A673 (cell line): ENCODE measurements at regions of chr19 and their contacts with region 1.

Region 1: GRCh38 chr19:48588670-48589399 is 17.7 kb upstream of the SPACA4 start:
- DNase-seq: peak; percentile 92
- H3K4me3 ChIP-seq: peak overlapping the region; percentile 47
- H3K27ac ChIP-seq: no peak overlapping the region
- H3K4me1 ChIP-seq: peaks cover 4% of the 10 kb centered on the region
- H3K27me3 ChIP-seq: no peaks in the 10 kb centered on the region
- CTCF ChIP-seq: peak; percentile 99

Region 2: DNA sequence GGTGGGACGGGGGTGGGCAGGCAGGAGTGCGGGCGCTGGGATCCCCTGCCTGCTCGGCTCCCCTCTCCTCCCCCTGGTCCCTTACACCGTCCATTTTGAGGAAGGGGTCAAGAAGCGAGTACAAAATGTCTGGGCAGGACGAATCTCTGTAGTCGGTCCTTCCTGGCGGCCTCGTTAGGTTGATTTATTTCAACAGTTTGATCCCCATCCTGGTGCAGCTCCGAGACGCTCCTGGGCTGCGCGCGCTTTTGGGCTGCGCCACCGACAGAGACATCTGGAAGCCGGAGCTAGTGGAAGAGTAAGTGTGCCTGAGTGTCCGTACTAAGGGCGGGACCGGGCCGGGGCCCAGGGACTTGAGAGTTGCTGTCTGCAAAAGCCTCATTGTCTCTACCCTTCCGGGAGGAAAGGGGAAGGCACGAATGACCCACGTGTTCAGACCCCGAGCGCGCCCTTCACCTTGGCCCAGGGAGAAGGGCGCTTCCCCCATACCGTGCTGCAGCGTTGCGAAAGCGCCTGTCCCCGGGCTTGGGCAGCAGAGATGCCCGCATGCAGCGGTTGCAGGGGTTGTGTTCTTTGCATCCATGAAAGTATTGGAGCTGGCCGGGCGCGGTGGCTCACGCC is 317.2 kb before region 1 on chr19:
- CTCF ChIA-PET with region 1: interaction called, 10 read pairs
- POLR2A ChIA-PET with region 1: interaction called, 7 read pairs
- intact Hi-C with region 1: loop called (anchors 5 kb)
- DNase-seq: peak; percentile 62
- H3K4me3 ChIP-seq: peak overlapping the region; percentile 60
- H3K27ac ChIP-seq: peak overlapping the region; percentile 72
- H3K4me1 ChIP-seq: peaks cover 3% of the 10 kb centered on the region
- H3K27me3 ChIP-seq: no peaks in the 10 kb centered on the region
- CTCF ChIP-seq: no peak

Region 3: DNA sequence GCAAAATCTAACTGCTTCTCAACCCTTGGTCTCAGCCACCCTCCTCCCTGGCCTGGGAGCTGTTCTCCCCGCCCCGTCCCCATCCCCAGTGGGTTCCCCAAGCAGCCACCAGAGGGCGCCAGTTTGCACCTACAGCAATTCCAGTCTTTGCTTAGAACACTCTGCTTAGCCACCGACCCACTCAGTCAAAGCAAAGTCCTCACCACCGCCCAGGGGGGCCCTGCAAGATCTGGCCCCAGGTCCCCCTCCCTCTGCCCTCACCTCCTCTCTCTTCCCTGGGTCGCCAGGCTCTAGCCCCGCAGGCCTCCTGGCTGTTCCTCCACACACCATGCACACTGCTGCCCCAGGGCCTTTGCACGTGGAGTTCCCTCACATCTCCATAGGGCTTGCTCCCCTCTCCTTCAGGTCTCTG is 237.5 kb before region 1 on chr19:
- CTCF ChIA-PET with region 1: interaction called, 11 read pairs
- POLR2A ChIA-PET with region 1: no interaction called
- intact Hi-C with region 1: no loop called
- DNase-seq: peak; percentile 76
- H3K4me3 ChIP-seq: no peak overlapping the region
- H3K27ac ChIP-seq: no peak overlapping the region
- H3K4me1 ChIP-seq: no peaks in the 10 kb centered on the region
- H3K27me3 ChIP-seq: no peaks in the 10 kb centered on the region
- CTCF ChIP-seq: peak; percentile 92

Region 4: GRCh38 chr19:48506138-48506733 is 82.6 kb before region 1 on chr19:
- CTCF ChIA-PET with region 1: interaction called, 42 read pairs
- POLR2A ChIA-PET with region 1: no interaction called
- intact Hi-C with region 1: loop called (anchors 1 kb)
- DNase-seq: peak; percentile 78
- H3K4me3 ChIP-seq: no peak overlapping the region
- H3K27ac ChIP-seq: no peak overlapping the region
- H3K4me1 ChIP-seq: peaks cover 6% of the 10 kb centered on the region
- H3K27me3 ChIP-seq: no peaks in the 10 kb centered on the region
- CTCF ChIP-seq: peak; percentile 68

Region 5: GRCh38 chr19:48540110-48540509 is 48.7 kb before region 1 on chr19:
- CTCF ChIA-PET with region 1: no interaction called
- POLR2A ChIA-PET with region 1: no interaction called
- intact Hi-C with region 1: no loop called
- DNase-seq: no peak
- H3K4me3 ChIP-seq: no peak overlapping the region
- H3K27ac ChIP-seq: no peak overlapping the region
- H3K4me1 ChIP-seq: no peaks in the 10 kb centered on the region
- H3K27me3 ChIP-seq: no peaks in the 10 kb centered on the region
- CTCF ChIP-seq: no peak

Region 6: DNA sequence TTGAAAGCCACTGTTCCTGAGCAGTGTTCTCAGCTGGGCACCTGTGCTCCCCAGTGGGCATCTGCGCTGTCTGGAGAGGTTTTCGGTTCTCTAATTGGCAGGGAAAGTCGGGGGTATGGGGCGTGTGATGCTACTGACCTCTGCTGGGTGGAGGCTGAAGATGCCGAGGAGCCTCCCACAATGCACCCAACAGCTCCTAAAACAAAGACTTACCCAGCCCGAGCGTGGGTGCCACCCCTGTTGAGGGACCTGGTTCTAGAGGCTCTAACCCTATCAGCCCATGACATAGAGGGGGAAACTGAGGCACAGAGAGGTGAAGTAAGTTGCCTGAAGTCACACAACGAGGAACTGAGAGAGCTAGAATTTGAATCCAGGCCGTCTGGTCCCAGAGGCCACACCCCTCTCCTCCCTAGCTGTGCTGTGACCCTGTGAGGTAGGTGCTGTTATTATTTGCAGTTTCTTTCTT is 20.0 kb after region 1 on chr19:
- CTCF ChIA-PET with region 1: interaction called, 10 read pairs
- POLR2A ChIA-PET with region 1: no interaction called
- intact Hi-C with region 1: no loop called
- DNase-seq: peak; percentile 69
- H3K4me3 ChIP-seq: no peak overlapping the region
- H3K27ac ChIP-seq: no peak overlapping the region
- H3K4me1 ChIP-seq: no peaks in the 10 kb centered on the region
- H3K27me3 ChIP-seq: no peaks in the 10 kb centered on the region
- CTCF ChIP-seq: peak; percentile 68

Region 7: DNA sequence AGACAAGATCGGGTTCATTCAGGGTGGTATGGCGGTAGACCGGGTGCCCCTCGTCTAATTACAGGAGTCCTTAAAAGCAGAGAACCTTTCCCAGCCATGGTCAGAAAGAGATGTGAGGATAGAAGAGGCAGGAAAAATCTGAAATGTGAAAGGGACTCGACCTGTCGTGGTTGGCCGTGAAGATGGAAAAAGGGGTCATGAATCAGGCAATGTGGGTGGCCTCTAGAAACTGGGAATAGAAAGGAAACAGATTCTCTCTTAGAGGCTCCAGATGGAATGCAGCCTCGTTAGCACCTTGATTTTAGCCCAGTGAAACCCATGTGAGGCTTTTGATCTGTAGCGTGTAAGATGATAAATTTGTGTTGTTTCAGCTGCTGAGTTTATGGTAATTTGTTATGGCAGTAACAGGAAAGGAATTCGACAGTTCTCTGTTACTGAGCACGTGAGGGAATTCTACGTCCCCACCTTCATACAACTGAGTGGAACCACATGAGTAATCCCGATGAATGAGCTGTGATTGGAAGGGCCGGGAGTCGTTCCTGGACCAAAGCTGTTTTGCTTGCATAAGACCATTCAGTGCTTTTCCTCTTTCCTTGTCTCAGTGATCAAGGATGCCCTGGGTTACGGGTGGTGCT is 68.1 kb after region 1 on chr19:
- CTCF ChIA-PET with region 1: no interaction called
- POLR2A ChIA-PET with region 1: no interaction called
- intact Hi-C with region 1: no loop called
- DNase-seq: no peak
- H3K4me3 ChIP-seq: no peak overlapping the region
- H3K27ac ChIP-seq: no peak overlapping the region
- H3K4me1 ChIP-seq: peaks cover 6% of the 10 kb centered on the region
- H3K27me3 ChIP-seq: no peaks in the 10 kb centered on the region
- CTCF ChIP-seq: no peak

Region 8: GRCh38 chr19:49430678-49431329 is 842.0 kb after region 1 on chr19:
- CTCF ChIA-PET with region 1: no interaction called
- POLR2A ChIA-PET with region 1: no interaction called
- intact Hi-C with region 1: no loop called
- DNase-seq: no peak
- H3K4me3 ChIP-seq: no peak overlapping the region
- H3K27ac ChIP-seq: no peak overlapping the region
- H3K4me1 ChIP-seq: peaks cover 9% of the 10 kb centered on the region
- H3K27me3 ChIP-seq: peaks cover 29% of the 10 kb centered on the region
- CTCF ChIP-seq: peak; percentile 64